GM13977 (cell line): ENCODE measurements at regions of chr2 and their contacts with region 1.

Region 1: GRCh38 chr2:207594264-207594663 is 30.9 kb downstream of the METTL21A start:
- DNase-seq: no peak
- CTCF ChIP-seq: no peak

Region 2: GRCh38 chr2:207539470-207539869 is 54.8 kb before region 1 on chr2:
- in situ Hi-C with region 1: loop called (anchors 5 kb)
- DNase-seq: no peak
- CTCF ChIP-seq: no peak